GM12878 (cell line): ENCODE measurements at regions of chr1 and their contacts with region 1.

Region 1: DNA sequence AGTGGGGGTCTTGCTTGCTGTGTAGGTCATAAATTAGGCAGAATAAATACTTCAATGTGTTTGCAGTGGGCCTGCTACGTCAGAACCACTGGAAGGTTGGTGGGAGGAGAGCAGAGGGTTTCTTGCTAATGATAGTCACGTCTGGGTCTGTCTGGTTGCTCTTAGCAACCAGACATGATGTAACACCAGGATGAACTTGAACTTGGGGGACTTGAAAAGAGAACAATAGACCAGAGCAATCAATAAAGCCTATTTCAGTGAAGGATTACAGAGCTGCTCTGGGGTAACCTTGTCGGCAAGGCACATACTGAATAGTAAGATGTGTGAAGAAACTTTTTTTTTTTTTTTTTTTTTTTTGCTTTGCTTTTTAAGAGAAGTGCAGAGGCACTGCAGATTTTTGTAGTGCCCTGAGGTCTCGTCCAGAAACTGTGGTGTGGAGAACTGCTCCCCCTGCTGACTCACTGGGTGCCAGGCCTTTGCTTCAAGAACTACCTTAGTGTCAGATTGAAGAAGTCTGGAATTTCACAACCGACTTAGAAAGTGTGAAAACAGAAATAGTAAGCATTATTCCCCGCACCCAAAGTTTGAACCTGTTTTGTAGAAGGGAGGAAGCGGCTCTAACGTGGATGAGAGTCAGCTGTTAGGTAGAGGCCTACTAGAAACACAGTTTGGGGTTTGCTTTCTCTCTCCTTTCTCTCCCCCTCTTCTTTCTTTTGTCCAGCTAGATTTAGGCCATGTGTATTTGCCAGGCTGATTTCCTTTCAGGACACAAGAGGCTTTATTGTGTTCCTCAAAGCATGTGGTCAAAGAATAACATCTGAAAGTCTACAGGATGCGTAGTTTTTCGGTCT is 271.6 kb downstream of the TM2D1 start:
- DNase-seq: peak; percentile 15
- ATAC-seq: peak; percentile 93
- H3K4me3 ChIP-seq: no peak overlapping the region
- H3K27ac ChIP-seq: no peak overlapping the region
- H3K4me1 ChIP-seq: no peaks in the 10 kb centered on the region
- H3K27me3 ChIP-seq: no peaks in the 10 kb centered on the region
- CTCF ChIP-seq: peak; percentile 69 to 84 (median 80)
- EP300 ChIP-seq: no peak
- POLR2A ChIP-seq: no peak
- RAD21 ChIP-seq: peak; percentile 74

Region 2: DNA sequence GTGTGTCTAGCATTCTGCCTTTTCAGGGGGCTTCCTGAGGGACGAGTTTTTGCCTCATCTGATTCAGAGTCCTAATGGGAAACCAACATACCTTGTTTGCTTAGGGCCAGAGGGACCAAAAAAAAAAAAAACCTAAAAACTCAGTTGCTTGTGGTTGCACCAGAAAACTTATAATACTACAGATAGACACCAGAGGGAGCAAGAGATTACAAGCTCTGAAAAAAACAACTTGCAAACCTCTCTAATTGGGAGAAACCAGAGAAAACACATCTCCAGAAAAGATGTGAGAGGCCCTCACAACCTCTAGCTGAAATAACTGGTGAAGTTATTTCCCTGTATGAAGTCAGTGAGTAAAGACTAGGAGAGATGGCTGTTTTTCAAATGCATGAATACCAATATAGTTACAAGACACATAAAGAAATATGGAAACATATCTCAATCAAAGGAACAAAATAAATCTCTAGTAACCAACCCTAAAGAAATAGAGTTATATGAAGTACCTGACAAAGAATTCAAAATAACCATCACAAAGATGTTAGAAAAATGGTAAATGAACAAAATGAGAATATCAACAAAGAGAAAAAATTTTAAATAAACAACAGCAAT is 604.6 kb before region 1 on chr1:
- CTCF ChIA-PET with region 1: interaction called, 3 read pairs
- POLR2A ChIA-PET with region 1: no interaction called
- RAD21 ChIA-PET with region 1: no interaction called
- SMC1A ChIA-PET with region 1: no interaction called
- in situ Hi-C with region 1: loop called (anchors 10 kb)
- intact Hi-C with region 1: loop called (anchors 2 kb)
- DNase-seq: no peak
- ATAC-seq: peak; percentile 15; the same call in 1 of the 3 replicates
- H3K4me3 ChIP-seq: no peak overlapping the region
- H3K27ac ChIP-seq: no peak overlapping the region
- H3K4me1 ChIP-seq: no peaks in the 10 kb centered on the region
- H3K27me3 ChIP-seq: no peaks in the 10 kb centered on the region
- CTCF ChIP-seq: peak; percentile 23 to 42 (median 37); a peak in 5 of 6 replicates
- EP300 ChIP-seq: no peak
- POLR2A ChIP-seq: no peak
- RAD21 ChIP-seq: peak; percentile 53

Region 3: DNA sequence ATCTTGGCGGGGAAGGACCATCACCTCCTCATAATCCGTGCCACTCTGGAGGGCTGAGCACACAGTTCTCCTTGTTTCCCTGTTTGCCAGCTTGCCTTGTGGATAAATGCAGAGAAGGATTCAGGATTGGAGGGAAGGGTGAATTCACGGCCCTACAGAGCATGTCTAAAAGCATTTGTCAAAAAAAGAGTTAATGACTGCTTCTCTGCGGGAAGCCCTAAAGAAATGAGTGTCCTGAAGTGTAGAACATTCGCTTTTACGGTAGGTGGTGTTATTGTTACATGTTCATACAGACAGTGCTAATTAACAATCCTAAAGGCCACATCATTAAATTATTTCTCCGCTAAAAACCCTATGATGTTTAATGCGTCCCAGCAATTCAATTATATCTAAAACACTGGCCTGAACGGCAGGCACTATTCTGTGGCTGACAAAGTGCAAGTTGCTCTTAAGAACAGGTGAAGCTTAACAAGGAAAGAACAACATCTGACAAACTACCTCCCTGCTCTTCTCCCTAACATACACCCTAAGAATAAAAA is 483.3 kb before region 1 on chr1:
- CTCF ChIA-PET with region 1: no interaction called
- POLR2A ChIA-PET with region 1: no interaction called
- RAD21 ChIA-PET with region 1: no interaction called
- SMC1A ChIA-PET with region 1: no interaction called
- in situ Hi-C with region 1: loop called (anchors 10 kb)
- intact Hi-C with region 1: loop called (anchors 1 kb)
- DNase-seq: no peak
- ATAC-seq: peak; percentile 51; the same call in 2 of the 3 replicates
- H3K4me3 ChIP-seq: no peak overlapping the region
- H3K27ac ChIP-seq: no peak overlapping the region
- H3K4me1 ChIP-seq: no peaks in the 10 kb centered on the region
- H3K27me3 ChIP-seq: no peaks in the 10 kb centered on the region
- CTCF ChIP-seq: peak in 1 of 3 experiments; percentile 37; a peak in 1 of 6 replicates
- EP300 ChIP-seq: no peak
- POLR2A ChIP-seq: no peak
- RAD21 ChIP-seq: peak; percentile 39; the same call in 1 of the 2 replicates

Region 4: GRCh38 chr1:61043010-61043820 is 410.1 kb before region 1 on chr1:
- CTCF ChIA-PET with region 1: no interaction called
- POLR2A ChIA-PET with region 1: no interaction called
- RAD21 ChIA-PET with region 1: no interaction called
- SMC1A ChIA-PET with region 1: no interaction called
- in situ Hi-C with region 1: loop called (anchors 5 kb)
- intact Hi-C with region 1: no loop called
- DNase-seq: no peak
- ATAC-seq: peak; percentile 93
- H3K4me3 ChIP-seq: no peak overlapping the region
- H3K27ac ChIP-seq: no peak overlapping the region
- H3K4me1 ChIP-seq: no peaks in the 10 kb centered on the region
- H3K27me3 ChIP-seq: peaks cover 0 to 2% of the 10 kb centered on the region in 2 experiments; a peak in 1 of 4 replicates
- CTCF ChIP-seq: peak; percentile 56 to 64 (median 62)
- EP300 ChIP-seq: no peak
- POLR2A ChIP-seq: no peak
- RAD21 ChIP-seq: peak; percentile 34

Region 5: GRCh38 chr1:61612602-61613001 is 159.3 kb after region 1 on chr1:
- CTCF ChIA-PET with region 1: no interaction called
- POLR2A ChIA-PET with region 1: no interaction called
- RAD21 ChIA-PET with region 1: no interaction called
- SMC1A ChIA-PET with region 1: no interaction called
- in situ Hi-C with region 1: no loop called
- intact Hi-C with region 1: no loop called
- DNase-seq: no peak
- ATAC-seq: peak; percentile 54
- H3K4me3 ChIP-seq: no peak overlapping the region
- H3K27ac ChIP-seq: no peak overlapping the region
- H3K4me1 ChIP-seq: no peaks in the 10 kb centered on the region
- H3K27me3 ChIP-seq: no peaks in the 10 kb centered on the region
- CTCF ChIP-seq: no peak
- EP300 ChIP-seq: no peak
- POLR2A ChIP-seq: no peak
- RAD21 ChIP-seq: no peak

Region 6: GRCh38 chr1:61851849-61852669 is 398.7 kb after region 1 on chr1:
- CTCF ChIA-PET with region 1: interaction called, 3 read pairs
- POLR2A ChIA-PET with region 1: no interaction called
- RAD21 ChIA-PET with region 1: interaction called, 3 read pairs
- SMC1A ChIA-PET with region 1: no interaction called
- in situ Hi-C with region 1: no loop called
- intact Hi-C with region 1: loop called (anchors 10 kb)
- DNase-seq: no peak
- ATAC-seq: peak; percentile 84
- H3K4me3 ChIP-seq: no peak overlapping the region
- H3K27ac ChIP-seq: no peak overlapping the region
- H3K4me1 ChIP-seq: no peaks in the 10 kb centered on the region
- H3K27me3 ChIP-seq: no peaks in the 10 kb centered on the region
- CTCF ChIP-seq: peak; percentile 60 to 78 (median 67)
- EP300 ChIP-seq: no peak
- POLR2A ChIP-seq: no peak
- RAD21 ChIP-seq: peak; percentile 90